ENCODE measurements at regions of chr15 and their contacts with region 1.

Region 1: DNA sequence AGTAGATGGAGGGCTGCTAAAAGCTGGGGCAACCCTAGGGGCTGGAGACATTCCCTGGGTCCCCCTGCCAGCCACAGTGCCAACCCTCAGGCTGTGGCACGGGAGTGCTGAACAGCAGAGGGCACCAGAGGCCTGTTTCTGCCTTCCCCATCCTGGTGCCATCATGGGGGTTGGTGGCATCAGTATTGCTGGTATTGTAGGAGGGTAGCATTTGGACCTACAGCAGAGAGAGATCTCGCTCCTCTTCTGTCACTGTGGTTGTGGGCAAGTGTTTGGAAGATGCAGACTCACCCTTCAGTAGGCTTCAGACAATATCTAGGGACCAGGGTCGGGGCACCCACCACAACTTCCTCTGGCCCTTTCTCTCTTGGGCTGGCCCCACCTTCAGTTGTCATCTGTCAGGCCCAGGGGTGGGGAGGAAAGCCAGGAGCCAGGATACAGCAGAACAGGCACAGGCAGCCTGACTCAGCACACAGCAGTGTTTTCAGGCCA is 123.5 kb downstream of the RPLP1 start:
- ATAC-seq: peak; percentile 70 to 93 (median 82)
- H3K4me3 ChIP-seq: no peak overlapping the region
- H3K27ac ChIP-seq: no peak overlapping the region
- H3K4me1 ChIP-seq: peaks cover 26 to 31% of the 10 kb centered on the region in 2 donors

Region 2: GRCh38 chr15:69489073-69489571 is 87.0 kb before region 1 on chr15:
- in situ Hi-C with region 1: loop called in 1 of 9 experiments (anchors 10 kb)
- ATAC-seq: peak in 3 of 8 experiments; percentile 42 to 84 (median 45)
- H3K4me3 ChIP-seq: no peak overlapping the region
- H3K27ac ChIP-seq: no peak overlapping the region
- H3K4me1 ChIP-seq: no peaks in the 10 kb centered on the region

Region 3: DNA sequence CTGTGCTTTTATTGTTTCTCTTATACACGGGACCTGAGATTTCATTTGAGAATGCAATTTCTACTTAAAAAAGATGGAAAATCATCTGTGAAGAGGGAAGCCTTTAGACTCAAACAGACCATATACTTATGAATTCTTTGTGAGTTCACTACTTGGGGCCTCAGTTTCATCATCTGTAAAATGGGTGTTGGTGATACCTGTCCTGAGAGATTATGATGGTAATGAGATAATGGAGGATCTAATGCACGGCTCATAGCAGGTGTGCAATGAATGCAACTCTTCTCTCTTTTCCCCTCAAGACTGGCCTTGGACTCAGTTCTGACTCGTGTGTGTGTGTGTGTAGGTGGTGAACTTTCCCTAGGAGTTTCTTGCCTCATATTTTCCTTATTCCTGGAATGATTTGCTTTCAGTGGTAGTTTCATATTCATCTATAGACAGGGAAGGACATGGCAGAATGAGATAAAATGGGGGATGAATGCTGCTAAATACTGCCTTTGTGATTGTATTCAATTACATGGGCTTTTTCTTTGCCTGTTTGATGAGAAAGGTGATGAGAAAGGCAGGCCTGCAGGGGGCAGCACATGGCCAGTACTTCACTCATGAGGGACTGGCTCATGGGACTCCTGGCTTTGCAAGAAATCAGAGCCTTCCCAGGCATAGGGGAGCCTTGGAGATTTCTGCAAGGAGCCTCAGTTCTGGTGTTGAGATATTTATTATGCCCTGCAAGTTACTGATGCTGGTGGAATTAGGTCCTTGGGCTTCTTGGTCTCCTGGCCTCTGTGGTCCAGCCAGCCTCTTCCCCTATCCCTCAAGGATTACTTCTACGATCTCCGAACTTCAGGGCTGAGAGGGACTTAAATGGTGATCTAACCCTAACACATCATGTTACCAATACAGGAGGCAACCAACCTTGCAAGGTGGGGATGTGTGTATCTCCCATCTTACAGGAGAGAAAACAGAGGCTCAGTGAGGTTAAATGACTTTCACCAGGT is 52.8 kb before region 1 on chr15:
- in situ Hi-C with region 1: no loop called
- ATAC-seq: peak; percentile 36 to 92 (median 68)
- H3K4me3 ChIP-seq: no peak overlapping the region
- H3K27ac ChIP-seq: no peak overlapping the region
- H3K4me1 ChIP-seq: peaks cover 37 to 43% of the 10 kb centered on the region in 2 donors